Heart right ventricle (tissue), 16 donors: ENCODE measurements at regions of chr2 and their contacts with region 1.

Region 1: GRCh38 chr2:110116033-110116710 is 550 bp upstream of the MALL start:
- DNase-seq: peak in 1 of 2 donors; percentile 76
- ATAC-seq: peak; percentile 62 to 90 (median 82)
- H3K4me3 ChIP-seq: peak overlapping the region in 9 of 10 donors; percentile 40 to 68 (median 59)
- H3K27ac ChIP-seq: peak overlapping the region; percentile 44 to 89 (median 84)
- H3K4me1 ChIP-seq: peaks cover 0 to 63% (median 23%) of the 10 kb centered on the region in 9 donors
- H3K27me3 ChIP-seq: peaks cover 0 to 47% (median 31%) of the 10 kb centered on the region in 7 donors
- CTCF ChIP-seq: peak; percentile 24 to 71 (median 57)

Region 2: DNA sequence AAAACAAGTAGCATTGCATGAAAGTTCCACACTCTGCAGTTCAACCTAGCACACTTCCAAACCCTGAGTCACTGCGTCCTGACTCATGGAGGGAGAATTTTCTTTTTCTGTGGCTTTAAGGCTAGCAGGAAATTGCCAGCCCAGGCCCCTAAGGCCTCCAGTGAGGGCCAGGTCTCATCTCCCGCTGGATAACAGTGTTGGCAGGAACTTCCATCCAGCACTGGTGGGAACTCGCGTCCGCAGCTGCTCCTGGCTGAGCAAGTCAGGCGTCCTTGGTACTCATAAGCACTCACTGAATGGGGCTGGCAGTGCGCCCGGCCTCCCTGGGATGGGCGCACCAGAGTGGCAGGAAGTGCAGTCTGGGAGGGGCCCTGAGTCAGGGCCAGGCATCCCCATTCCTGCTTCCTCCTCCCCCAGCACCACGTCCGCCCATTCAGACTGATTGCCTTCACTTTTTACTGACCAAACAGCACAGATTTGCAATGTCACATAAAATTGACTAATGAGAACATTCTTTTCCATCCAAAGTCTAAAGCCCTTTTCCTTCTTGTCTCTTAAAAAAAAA is 14.8 kb before region 1 on chr2:
- intact Hi-C with region 1: loop called in 1 of 10 experiments (anchors 1 kb)
- DNase-seq: peak; percentile 95 to 96
- ATAC-seq: peak; percentile 92 to 97 (median 96)
- H3K4me3 ChIP-seq: peak overlapping the region in 4 of 10 donors; percentile 7 to 21 (median 13)
- H3K27ac ChIP-seq: peak overlapping the region; percentile 78 to 95 (median 90)
- H3K4me1 ChIP-seq: peaks cover 6 to 91% (median 40%) of the 10 kb centered on the region in 9 donors
- H3K27me3 ChIP-seq: no peaks in the 10 kb centered on the region
- CTCF ChIP-seq: no peak

Region 3: GRCh38 chr2:110149330-110150220 is 33.4 kb after region 1 on chr2:
- intact Hi-C with region 1: loop called in 1 of 10 experiments (anchors 5 kb)
- DNase-seq: no peak
- ATAC-seq: peak in 5 of 8 donors; percentile 52 to 78 (median 64)
- H3K4me3 ChIP-seq: no peak overlapping the region
- H3K27ac ChIP-seq: peak overlapping the region in 3 of 10 donors; percentile 9 to 36 (median 13)
- H3K4me1 ChIP-seq: peaks cover 0 to 13% (median 0%) of the 10 kb centered on the region in 9 donors
- H3K27me3 ChIP-seq: no peaks in the 10 kb centered on the region
- CTCF ChIP-seq: no peak

Region 4: GRCh38 chr2:110157153-110157793 is 41.1 kb after region 1 on chr2:
- intact Hi-C with region 1: loop called in 3 of 10 experiments (anchors 5 kb)
- DNase-seq: peak in 1 of 2 donors; percentile 21
- ATAC-seq: peak in 7 of 8 donors; percentile 61 to 90 (median 86)
- H3K4me3 ChIP-seq: no peak overlapping the region
- H3K27ac ChIP-seq: peak overlapping the region in 2 of 10 donors; percentile 38 to 61
- H3K4me1 ChIP-seq: peaks cover 0 to 13% (median 0%) of the 10 kb centered on the region in 9 donors
- H3K27me3 ChIP-seq: no peaks in the 10 kb centered on the region
- CTCF ChIP-seq: peak; percentile 56 to 90 (median 80)